Vagina (tissue), 2 donors: ENCODE measurements at regions of chr3 and their contacts with region 1.

Region 1: GRCh38 chr3:68924897-68925296 is 7.5 kb downstream of the TAFA4 start:
- DNase-seq: no peak
- H3K4me3 ChIP-seq: no peak overlapping the region
- H3K27ac ChIP-seq: no peak overlapping the region
- H3K4me1 ChIP-seq: no peaks in the 10 kb centered on the region
- H3K27me3 ChIP-seq: no peaks in the 10 kb centered on the region
- CTCF ChIP-seq: no peak
- POLR2A ChIP-seq: no peak

Region 2: DNA sequence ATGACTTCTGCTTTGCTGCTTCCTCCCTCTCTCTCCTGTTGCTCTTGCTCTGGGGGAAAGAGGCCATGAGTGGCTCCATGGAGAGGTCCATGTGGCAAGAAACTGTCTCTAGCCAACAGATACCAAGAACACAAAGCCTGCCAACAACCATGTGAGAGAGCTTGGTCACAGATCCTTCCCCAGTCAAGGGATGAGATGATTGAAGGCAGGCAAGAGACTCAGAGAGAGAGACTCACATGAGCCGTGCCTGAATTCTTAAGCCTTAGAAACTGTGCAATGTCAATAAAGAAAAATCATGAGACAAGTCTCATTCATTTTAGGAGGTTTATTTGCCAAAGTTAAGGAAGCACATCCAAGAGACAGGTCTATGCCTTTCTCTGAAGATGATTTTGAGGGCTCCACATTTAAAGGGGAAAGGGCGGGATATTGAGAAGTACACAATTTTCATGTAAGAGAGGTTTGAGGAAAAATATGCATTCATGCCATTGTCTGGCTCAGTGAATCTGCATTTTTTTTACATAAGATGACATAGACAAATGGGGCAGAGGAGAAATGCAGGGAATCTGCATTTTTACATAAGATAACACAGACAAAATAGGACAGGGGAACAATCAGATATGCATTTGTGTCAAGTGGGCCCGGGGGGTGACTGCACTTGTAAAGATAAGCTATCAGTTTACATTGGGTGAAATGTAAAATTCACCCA is 1211.0 kb before region 1 on chr3:
- intact Hi-C with region 1: loop called (anchors 5 kb)
- DNase-seq: no peak
- H3K4me3 ChIP-seq: no peak overlapping the region
- H3K27ac ChIP-seq: no peak overlapping the region
- H3K4me1 ChIP-seq: no peaks in the 10 kb centered on the region
- H3K27me3 ChIP-seq: no peaks in the 10 kb centered on the region
- CTCF ChIP-seq: no peak
- POLR2A ChIP-seq: no peak